Tibial artery (tissue), 4 donors: ENCODE measurements at regions of chr13 and their contacts with region 1.

Region 1: GRCh38 chr13:108155185-108156106 is 59.9 kb downstream of the LIG4 start:
- DNase-seq: peak in 1 of 2 donors; percentile 48
- H3K4me3 ChIP-seq: no peak overlapping the region
- H3K27ac ChIP-seq: no peak overlapping the region
- H3K4me1 ChIP-seq: no peaks in the 10 kb centered on the region
- H3K27me3 ChIP-seq: peaks cover 0 to 2% of the 10 kb centered on the region in 2 donors
- CTCF ChIP-seq: peak; percentile 58 to 76

Region 2: GRCh38 chr13:107211073-107211472 is 944.4 kb before region 1 on chr13:
- intact Hi-C with region 1: loop called (anchors 10 kb)
- DNase-seq: peak; percentile 83 to 85
- H3K4me3 ChIP-seq: no peak overlapping the region
- H3K27ac ChIP-seq: no peak overlapping the region
- H3K4me1 ChIP-seq: peaks cover 0 to 8% (median 0%) of the 10 kb centered on the region in 4 donors
- H3K27me3 ChIP-seq: peaks cover 0 to 3% of the 10 kb centered on the region in 2 donors
- CTCF ChIP-seq: peak; percentile 75 to 88

Region 3: GRCh38 chr13:107531816-107532215 is 623.6 kb before region 1 on chr13:
- intact Hi-C with region 1: no loop called
- DNase-seq: no peak
- H3K4me3 ChIP-seq: no peak overlapping the region
- H3K27ac ChIP-seq: no peak overlapping the region
- H3K4me1 ChIP-seq: no peaks in the 10 kb centered on the region
- H3K27me3 ChIP-seq: no peaks in the 10 kb centered on the region
- CTCF ChIP-seq: no peak